ENCODE measurements at regions of chr1 and their contacts with region 1.

Region 1: GRCh38 chr1:58783993-58784757 is at the start of gene JUN:
- DNase-seq: peak; percentile 99
- ATAC-seq: peak; percentile 74
- H3K4me3 Mint-ChIP-seq: peak within 1 kb of the TSS; percentile 87
- H3K27ac Mint-ChIP-seq: peak within 1 kb of the TSS; percentile 95
- H3K4me1 Mint-ChIP-seq: peaks cover 30% of the 10 kb centered on the region
- H3K27me3 Mint-ChIP-seq: no peaks in the 10 kb centered on the region
- total RNA-seq, gene JUN: 107 to 110 TPM

Region 2: DNA sequence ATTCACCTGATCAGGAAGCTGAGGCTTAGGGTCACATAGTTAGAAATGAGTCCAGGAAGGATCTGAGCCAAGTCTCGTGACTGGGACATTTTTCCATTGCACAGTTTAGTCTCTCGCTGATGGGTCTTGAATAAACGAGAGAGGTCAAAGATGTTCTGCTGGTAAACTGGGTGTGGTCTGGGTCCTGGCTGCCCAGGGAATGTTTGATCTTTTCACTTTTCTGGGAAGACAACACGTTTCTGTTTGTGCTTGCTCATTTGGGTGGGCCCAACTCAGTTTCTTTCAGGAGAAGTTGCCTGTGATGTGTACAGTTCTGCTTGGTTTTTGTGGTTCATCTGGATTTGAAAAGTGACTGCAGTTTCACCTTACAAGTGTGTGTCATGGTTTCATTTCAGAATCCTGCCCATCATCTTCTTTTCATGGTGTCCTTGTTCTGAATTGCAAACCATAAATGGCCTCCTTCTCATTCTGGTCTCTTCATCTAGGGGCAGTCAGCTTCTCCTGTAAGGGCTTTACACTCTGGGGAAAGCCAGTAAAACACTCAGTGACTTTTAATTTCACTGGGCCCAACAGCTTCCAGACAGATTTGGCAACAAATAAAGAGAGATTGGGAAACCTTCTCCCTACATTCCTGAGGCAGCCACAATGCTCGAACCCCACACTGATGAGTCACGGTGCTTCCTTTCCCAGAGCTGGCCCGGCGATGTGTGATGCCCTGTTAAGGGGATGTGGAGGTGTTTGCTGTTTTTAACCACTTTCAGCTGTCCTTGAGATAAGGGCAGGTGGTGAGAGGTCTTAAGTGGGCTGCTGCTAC is 199.9 kb before region 1 on chr1:
- CTCF ChIA-PET with region 1: no interaction called
- POLR2A ChIA-PET with region 1: no interaction called
- DNase-seq: no peak
- ATAC-seq: no peak
- H3K4me3 Mint-ChIP-seq: no peak overlapping the region
- H3K27ac Mint-ChIP-seq: no peak overlapping the region
- H3K4me1 Mint-ChIP-seq: peaks cover 21% of the 10 kb centered on the region
- H3K27me3 Mint-ChIP-seq: peaks cover 40% of the 10 kb centered on the region

Region 3: DNA sequence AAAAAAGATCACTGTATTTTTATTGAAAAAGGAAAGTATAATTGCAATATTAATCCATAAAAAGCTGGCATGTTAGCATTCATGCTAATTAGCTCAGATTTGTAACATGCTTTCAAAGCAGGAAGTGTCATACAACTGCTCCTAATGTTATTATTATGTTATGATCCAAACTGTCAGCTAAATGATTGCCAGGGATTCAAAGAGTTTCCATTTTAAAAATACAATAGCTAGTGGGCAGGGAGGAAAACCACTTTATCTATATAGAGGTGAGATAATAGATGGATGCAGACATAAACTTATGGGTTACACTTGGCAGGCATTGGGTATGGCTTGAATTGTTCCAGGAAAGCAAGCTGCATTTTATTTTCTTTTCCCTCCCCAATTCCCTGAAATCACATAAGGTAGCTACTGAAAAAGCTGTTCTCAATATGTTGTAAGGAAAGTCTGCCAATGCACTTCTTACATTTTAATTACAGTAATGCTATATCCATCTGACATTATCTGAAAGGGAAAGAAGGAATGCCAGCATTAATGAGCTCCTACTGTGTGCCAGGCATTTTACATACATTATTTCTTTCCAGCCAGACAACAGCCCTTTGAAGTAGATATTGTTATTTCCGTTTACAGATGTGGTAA is 74.5 kb before region 1 on chr1:
- CTCF ChIA-PET with region 1: no interaction called
- POLR2A ChIA-PET with region 1: no interaction called
- DNase-seq: no peak
- ATAC-seq: no peak
- H3K4me3 Mint-ChIP-seq: no peak overlapping the region
- H3K27ac Mint-ChIP-seq: no peak overlapping the region
- H3K4me1 Mint-ChIP-seq: peaks cover 5% of the 10 kb centered on the region
- H3K27me3 Mint-ChIP-seq: peaks cover 11% of the 10 kb centered on the region

Region 4: DNA sequence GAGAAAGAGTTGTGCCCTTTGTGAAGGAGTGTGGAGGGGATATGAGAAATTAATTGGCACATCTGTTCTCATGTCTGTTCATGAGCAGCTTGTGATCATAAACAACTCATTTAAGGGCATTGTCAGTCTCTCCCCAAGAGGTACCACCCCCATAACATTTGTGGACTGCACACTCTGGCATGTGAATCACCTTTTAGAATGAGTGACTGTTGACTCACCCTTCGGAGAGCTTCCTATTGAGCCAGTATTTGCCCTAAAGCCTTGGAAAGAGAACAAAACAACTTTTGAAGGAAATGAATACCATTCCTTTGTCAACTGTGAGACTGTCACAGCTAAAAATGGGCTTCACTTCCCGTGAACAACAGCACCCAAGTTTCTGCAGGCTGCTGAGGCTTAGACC is 56.8 kb before region 1 on chr1:
- CTCF ChIA-PET with region 1: interaction called, 7 read pairs
- POLR2A ChIA-PET with region 1: interaction called, 10 read pairs
- DNase-seq: no peak
- ATAC-seq: no peak
- H3K4me3 Mint-ChIP-seq: no peak overlapping the region
- H3K27ac Mint-ChIP-seq: peak overlapping the region; percentile 83
- H3K4me1 Mint-ChIP-seq: peaks cover 54% of the 10 kb centered on the region
- H3K27me3 Mint-ChIP-seq: no peaks in the 10 kb centered on the region

Region 5: DNA sequence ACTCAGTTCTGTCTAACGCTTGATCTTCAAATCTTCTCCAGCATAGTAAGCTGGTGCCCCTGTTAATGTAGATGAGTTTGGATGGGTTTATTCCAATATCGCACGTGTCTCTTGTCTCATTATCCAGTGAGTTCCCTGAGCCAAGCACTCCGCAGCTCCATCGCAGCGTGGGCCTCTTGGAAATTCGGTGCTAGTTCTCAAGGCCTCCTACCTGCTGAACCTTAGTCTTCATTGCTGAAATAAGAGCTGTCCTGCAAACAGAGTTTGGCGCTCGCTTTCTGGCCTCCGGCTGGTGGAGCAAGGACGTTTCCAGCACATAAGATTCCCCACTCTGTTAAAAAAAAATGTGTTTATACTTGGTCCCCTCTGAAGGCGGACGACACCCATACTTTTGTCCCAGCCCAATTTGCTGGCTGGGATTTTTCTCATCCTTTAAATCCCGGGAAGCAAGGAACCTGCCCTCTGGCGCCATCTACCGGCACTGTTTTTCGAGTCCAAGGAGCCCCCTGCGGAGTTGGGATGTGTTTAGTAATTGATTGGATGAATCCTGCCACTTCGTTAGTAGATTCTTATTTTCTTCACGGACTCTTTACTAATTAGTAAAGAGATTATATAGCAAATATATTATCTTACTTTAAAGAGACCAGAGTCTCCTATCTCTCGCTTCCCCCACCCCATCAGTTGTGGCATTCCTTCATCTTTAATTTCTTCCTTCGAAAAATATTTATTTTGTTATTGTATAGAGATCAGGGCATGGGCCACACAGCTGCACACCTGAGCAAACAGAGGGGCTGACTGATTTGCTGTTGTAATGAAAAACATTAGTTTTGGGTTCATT is 15.0 kb before region 1 on chr1:
- CTCF ChIA-PET with region 1: interaction called, 6 read pairs
- POLR2A ChIA-PET with region 1: interaction called, 14 read pairs
- DNase-seq: peak; percentile 59
- ATAC-seq: no peak
- H3K4me3 Mint-ChIP-seq: no peak overlapping the region
- H3K27ac Mint-ChIP-seq: no peak overlapping the region
- H3K4me1 Mint-ChIP-seq: peaks cover 13% of the 10 kb centered on the region
- H3K27me3 Mint-ChIP-seq: peaks cover 9% of the 10 kb centered on the region

Region 6: GRCh38 chr1:58857680-58858673 is 73.8 kb after region 1 on chr1:
- CTCF ChIA-PET with region 1: interaction called, 12 read pairs
- POLR2A ChIA-PET with region 1: interaction called, 32 read pairs
- DNase-seq: peak; percentile 58
- ATAC-seq: peak; percentile 82
- H3K4me3 Mint-ChIP-seq: peak overlapping the region; percentile 53
- H3K27ac Mint-ChIP-seq: peak overlapping the region; percentile 93
- H3K4me1 Mint-ChIP-seq: peaks cover 49% of the 10 kb centered on the region
- H3K27me3 Mint-ChIP-seq: no peaks in the 10 kb centered on the region

Region 7: GRCh38 chr1:58922302-58923089 is 138.3 kb after region 1 on chr1:
- CTCF ChIA-PET with region 1: interaction called, 3 read pairs
- POLR2A ChIA-PET with region 1: interaction called, 14 read pairs
- DNase-seq: peak; percentile 87
- ATAC-seq: peak; percentile 99
- H3K4me3 Mint-ChIP-seq: peak overlapping the region; percentile 20
- H3K27ac Mint-ChIP-seq: peak overlapping the region; percentile 83
- H3K4me1 Mint-ChIP-seq: peaks cover 28% of the 10 kb centered on the region
- H3K27me3 Mint-ChIP-seq: no peaks in the 10 kb centered on the region

Region 8: DNA sequence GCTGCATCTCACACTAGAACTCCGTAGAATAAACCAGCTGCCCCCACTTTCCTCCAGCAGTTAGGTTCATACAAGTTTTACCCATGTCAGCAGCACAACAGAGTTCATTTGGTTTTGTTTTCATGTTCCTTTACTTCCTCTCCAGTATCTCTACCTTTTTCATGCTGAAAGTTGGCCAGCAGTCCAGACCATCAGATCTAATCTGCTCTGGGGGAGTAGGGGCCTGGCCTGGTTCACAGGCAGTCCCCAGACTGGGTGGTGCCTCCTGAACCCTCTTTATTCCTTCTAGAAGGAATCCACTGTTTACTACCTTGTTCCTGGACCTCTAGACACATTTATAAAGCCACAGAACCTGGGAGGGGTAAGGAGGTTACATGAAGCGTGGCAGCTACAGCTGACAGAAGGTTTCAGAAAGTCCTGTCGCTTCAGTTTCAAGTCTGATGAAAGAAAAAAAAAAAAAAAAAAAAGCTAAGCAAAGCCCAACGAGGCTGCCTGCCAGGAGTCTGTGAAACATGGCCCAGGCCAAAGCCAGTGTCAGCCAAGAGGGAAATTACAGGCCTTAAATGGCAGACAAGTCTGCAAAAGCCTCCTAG is 184.3 kb after region 1 on chr1:
- CTCF ChIA-PET with region 1: interaction called, 5 read pairs
- POLR2A ChIA-PET with region 1: interaction called, 10 read pairs
- DNase-seq: peak; percentile 63
- ATAC-seq: peak; percentile 75
- H3K4me3 Mint-ChIP-seq: peak overlapping the region; percentile 67
- H3K27ac Mint-ChIP-seq: peak overlapping the region; percentile 99
- H3K4me1 Mint-ChIP-seq: peaks cover 47% of the 10 kb centered on the region
- H3K27me3 Mint-ChIP-seq: peaks cover 3% of the 10 kb centered on the region

Region 9: GRCh38 chr1:59296358-59297256 is 512.4 kb after region 1 on chr1 and contains the start of gene FGGY:
- CTCF ChIA-PET with region 1: interaction called, 4 read pairs
- POLR2A ChIA-PET with region 1: interaction called, 21 read pairs
- DNase-seq: peak; percentile 94
- ATAC-seq: peak; percentile 97
- H3K4me3 Mint-ChIP-seq: peak within 1 kb of the TSS; percentile 88
- H3K27ac Mint-ChIP-seq: peak within 1 kb of the TSS; percentile 90
- H3K4me1 Mint-ChIP-seq: peaks cover 30% of the 10 kb centered on the region
- H3K27me3 Mint-ChIP-seq: no peaks in the 10 kb centered on the region
- total RNA-seq, gene FGGY: 8.5 to 9.4 TPM